CD4-positive, alpha-beta memory T cell (primary cell): ENCODE measurements at regions of chr5 and their contacts with region 1.

Region 1: DNA sequence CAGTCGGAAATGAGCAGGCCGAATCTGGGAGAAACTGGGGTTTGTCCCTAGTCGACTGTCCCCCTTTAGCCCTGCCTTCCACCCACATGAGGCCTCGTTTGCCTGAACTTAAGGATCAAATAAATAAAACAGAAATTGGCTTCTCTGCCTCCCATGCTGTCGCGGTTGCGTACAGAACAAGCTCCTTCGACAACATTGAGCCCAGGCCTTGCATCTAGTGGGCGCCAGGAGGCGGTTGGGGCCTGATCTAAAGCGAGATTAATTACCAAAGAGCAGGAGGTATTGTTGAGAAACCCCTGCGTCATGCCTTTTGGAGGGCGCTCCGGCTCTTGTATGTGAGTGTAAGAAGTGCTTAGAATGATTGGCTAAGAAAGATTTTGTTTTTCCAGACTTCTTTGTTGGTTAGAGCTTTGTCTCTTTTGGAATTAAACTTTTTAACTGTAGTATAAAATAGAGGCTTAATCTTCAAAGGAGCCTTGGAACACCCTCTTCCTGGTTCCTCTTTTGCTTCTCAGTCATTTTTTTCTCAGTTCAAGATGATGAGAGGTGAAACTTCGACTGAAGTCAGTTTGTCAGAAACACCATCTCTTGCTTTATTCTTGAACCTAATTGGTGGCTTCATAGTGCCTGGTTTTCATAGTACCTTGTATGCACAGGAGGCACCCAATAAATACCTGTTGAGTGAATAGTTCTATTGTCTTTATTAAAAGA is 827 bp downstream of the ATP6V0E1 start:
- DNase-seq: peak; percentile 75 to 91 (median 81)
- H3K4me3 ChIP-seq: peak overlapping the region; percentile 78 to 96
- H3K4me3 Mint-ChIP-seq: peak overlapping the region; percentile 92 to 99 (median 98)
- H3K27ac ChIP-seq: peak overlapping the region; percentile 94
- H3K27ac Mint-ChIP-seq: peak overlapping the region; percentile 95 to 99 (median 99)
- H3K4me1 ChIP-seq: peaks cover 55% of the 10 kb centered on the region
- H3K4me1 Mint-ChIP-seq: peaks cover 23 to 69% (median 46%) of the 10 kb centered on the region in 4 donors
- H3K27me3 ChIP-seq: no peaks in the 10 kb centered on the region
- H3K27me3 Mint-ChIP-seq: no peaks in the 10 kb centered on the region

Region 2: GRCh38 chr5:172920447-172920849 is 64.0 kb before region 1 on chr5:
- CTCF ChIA-PET with region 1: no interaction called
- POLR2A ChIA-PET with region 1: no interaction called
- intact Hi-C with region 1: no loop called
- DNase-seq: no peak
- H3K4me3 ChIP-seq: no peak overlapping the region
- H3K4me3 Mint-ChIP-seq: no peak overlapping the region
- H3K27ac ChIP-seq: no peak overlapping the region
- H3K27ac Mint-ChIP-seq: peak overlapping the region in 1 of 7 donors; percentile 30
- H3K4me1 ChIP-seq: no peaks in the 10 kb centered on the region
- H3K4me1 Mint-ChIP-seq: peaks cover 0 to 4% (median under 1%) of the 10 kb centered on the region in 4 donors
- H3K27me3 ChIP-seq: no peaks in the 10 kb centered on the region
- H3K27me3 Mint-ChIP-seq: no peaks in the 10 kb centered on the region

Region 3: GRCh38 chr5:172932313-172933017 is 51.9 kb before region 1 on chr5:
- CTCF ChIA-PET with region 1: no interaction called
- POLR2A ChIA-PET with region 1: no interaction called
- intact Hi-C with region 1: no loop called
- DNase-seq: peak; percentile 64 to 74 (median 70)
- H3K4me3 ChIP-seq: no peak overlapping the region
- H3K4me3 Mint-ChIP-seq: no peak overlapping the region
- H3K27ac ChIP-seq: no peak overlapping the region
- H3K27ac Mint-ChIP-seq: peak overlapping the region in 5 of 7 donors; percentile 54 to 80 (median 66)
- H3K4me1 ChIP-seq: peaks cover 4% of the 10 kb centered on the region
- H3K4me1 Mint-ChIP-seq: peaks cover 6 to 8% (median 6%) of the 10 kb centered on the region in 4 donors
- H3K27me3 ChIP-seq: no peaks in the 10 kb centered on the region
- H3K27me3 Mint-ChIP-seq: no peaks in the 10 kb centered on the region

Region 4: GRCh38 chr5:172973127-172973916 is 11.1 kb before region 1 on chr5:
- CTCF ChIA-PET with region 1: interaction called, 17 read pairs
- POLR2A ChIA-PET with region 1: interaction called, 13 read pairs
- intact Hi-C with region 1: no loop called
- DNase-seq: no peak
- H3K4me3 ChIP-seq: no peak overlapping the region
- H3K4me3 Mint-ChIP-seq: no peak overlapping the region
- H3K27ac ChIP-seq: no peak overlapping the region
- H3K27ac Mint-ChIP-seq: no peak overlapping the region
- H3K4me1 ChIP-seq: no peaks in the 10 kb centered on the region
- H3K4me1 Mint-ChIP-seq: no peaks in the 10 kb centered on the region
- H3K27me3 ChIP-seq: no peaks in the 10 kb centered on the region
- H3K27me3 Mint-ChIP-seq: peaks cover 0 to 2% of the 10 kb centered on the region in 2 donors

Region 5: GRCh38 chr5:173035904-173036707 is 51.7 kb after region 1 on chr5:
- CTCF ChIA-PET with region 1: interaction called, 18 read pairs
- POLR2A ChIA-PET with region 1: interaction called, 37 read pairs
- intact Hi-C with region 1: loop called (anchors 2 kb)
- DNase-seq: peak in 1 of 5 donors; percentile 40
- H3K4me3 ChIP-seq: peak overlapping the region; percentile 44 to 47
- H3K4me3 Mint-ChIP-seq: peak overlapping the region; percentile 80 to 95 (median 86)
- H3K27ac ChIP-seq: peak overlapping the region; percentile 71
- H3K27ac Mint-ChIP-seq: peak overlapping the region; percentile 90 to 97 (median 95)
- H3K4me1 ChIP-seq: peaks cover 46% of the 10 kb centered on the region
- H3K4me1 Mint-ChIP-seq: peaks cover 39 to 64% (median 54%) of the 10 kb centered on the region in 4 donors
- H3K27me3 ChIP-seq: no peaks in the 10 kb centered on the region
- H3K27me3 Mint-ChIP-seq: no peaks in the 10 kb centered on the region

Region 6: GRCh38 chr5:173144200-173145176 is 160.1 kb after region 1 on chr5 and contains the start of gene BNIP1:
- CTCF ChIA-PET with region 1: interaction called, 29 read pairs
- POLR2A ChIA-PET with region 1: interaction called, 28 read pairs
- intact Hi-C with region 1: loop called (anchors 1 kb)
- DNase-seq: peak; percentile 95 to 98 (median 95)
- H3K4me3 ChIP-seq: peak within 1 kb of the TSS; percentile 80 to 100
- H3K4me3 Mint-ChIP-seq: peak within 1 kb of the TSS; percentile 97 to 99 (median 98)
- H3K27ac ChIP-seq: peak within 1 kb of the TSS; percentile 94
- H3K27ac Mint-ChIP-seq: peak within 1 kb of the TSS; percentile 99 to 100 (median 99)
- H3K4me1 ChIP-seq: peaks cover 9% of the 10 kb centered on the region
- H3K4me1 Mint-ChIP-seq: peaks cover 8 to 19% (median 11%) of the 10 kb centered on the region in 4 donors
- H3K27me3 ChIP-seq: no peaks in the 10 kb centered on the region
- H3K27me3 Mint-ChIP-seq: no peaks in the 10 kb centered on the region
- total RNA-seq, gene BNIP1: 7.1 to 7.7 TPM

Region 7: GRCh38 chr5:173283318-173284288 is 299.2 kb after region 1 on chr5:
- CTCF ChIA-PET with region 1: no interaction called
- POLR2A ChIA-PET with region 1: no interaction called
- intact Hi-C with region 1: loop called (anchors 1 kb)
- DNase-seq: peak; percentile 45 to 62 (median 57)
- H3K4me3 ChIP-seq: no peak overlapping the region
- H3K4me3 Mint-ChIP-seq: peak overlapping the region in 2 of 8 donors; percentile 33 to 37
- H3K27ac ChIP-seq: no peak overlapping the region
- H3K27ac Mint-ChIP-seq: no peak overlapping the region
- H3K4me1 ChIP-seq: peaks cover 9% of the 10 kb centered on the region
- H3K4me1 Mint-ChIP-seq: peaks cover 0 to 8% (median 2%) of the 10 kb centered on the region in 4 donors
- H3K27me3 ChIP-seq: peaks cover 4% of the 10 kb centered on the region
- H3K27me3 Mint-ChIP-seq: peaks cover 43 to 61% of the 10 kb centered on the region in 2 donors

Region 8: DNA sequence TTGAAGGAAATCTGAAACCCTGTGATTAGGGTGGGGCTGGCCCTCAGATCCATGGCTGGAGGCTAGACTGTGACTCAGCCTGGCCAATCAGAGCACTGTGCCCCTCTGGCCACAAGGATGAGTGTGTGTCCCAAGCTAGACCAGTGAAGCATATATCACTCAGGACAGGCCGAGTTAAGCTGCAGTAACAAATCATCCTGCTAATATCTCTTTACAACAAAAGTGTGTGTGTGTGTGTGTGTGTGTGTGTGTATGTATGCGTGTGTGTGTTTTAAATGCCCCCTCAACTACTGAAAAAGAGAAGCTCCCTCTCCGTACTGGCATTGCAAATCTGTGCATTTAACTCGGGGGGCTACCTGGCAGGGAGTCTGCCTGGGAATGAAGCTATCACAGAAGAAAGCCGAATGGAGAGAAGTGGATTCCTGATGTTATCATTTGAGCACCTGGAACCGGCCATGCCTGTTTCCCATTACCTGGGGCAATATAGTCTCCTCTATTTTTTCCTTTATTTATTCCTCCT is 318.2 kb after region 1 on chr5:
- CTCF ChIA-PET with region 1: no interaction called
- POLR2A ChIA-PET with region 1: no interaction called
- intact Hi-C with region 1: no loop called
- DNase-seq: no peak
- H3K4me3 ChIP-seq: no peak overlapping the region
- H3K4me3 Mint-ChIP-seq: no peak overlapping the region
- H3K27ac ChIP-seq: no peak overlapping the region
- H3K27ac Mint-ChIP-seq: no peak overlapping the region
- H3K4me1 ChIP-seq: no peaks in the 10 kb centered on the region
- H3K4me1 Mint-ChIP-seq: peaks cover 0 to 2% (median 0%) of the 10 kb centered on the region in 4 donors
- H3K27me3 ChIP-seq: no peaks in the 10 kb centered on the region
- H3K27me3 Mint-ChIP-seq: peaks cover 22 to 25% of the 10 kb centered on the region in 2 donors